Transverse colon (tissue), 4 donors: ENCODE measurements at regions of chr1 and their contacts with region 1.

Region 1: GRCh38 chr1:34162852-34163766 is 1.9 kb downstream of the CSMD2 start:
- DNase-seq: peak; percentile 25
- H3K4me3 ChIP-seq: peak overlapping the region in 3 of 4 donors; percentile 20 to 42 (median 24)
- H3K27ac ChIP-seq: no peak overlapping the region
- H3K4me1 ChIP-seq: peaks cover 0 to 34% (median 17%) of the 10 kb centered on the region in 4 donors
- H3K27me3 ChIP-seq: peaks cover 83% of the 10 kb centered on the region
- CTCF ChIP-seq: peak; percentile 27 to 53 (median 39)
- EP300 ChIP-seq: no peak
- POLR2A ChIP-seq: no peak

Region 2: DNA sequence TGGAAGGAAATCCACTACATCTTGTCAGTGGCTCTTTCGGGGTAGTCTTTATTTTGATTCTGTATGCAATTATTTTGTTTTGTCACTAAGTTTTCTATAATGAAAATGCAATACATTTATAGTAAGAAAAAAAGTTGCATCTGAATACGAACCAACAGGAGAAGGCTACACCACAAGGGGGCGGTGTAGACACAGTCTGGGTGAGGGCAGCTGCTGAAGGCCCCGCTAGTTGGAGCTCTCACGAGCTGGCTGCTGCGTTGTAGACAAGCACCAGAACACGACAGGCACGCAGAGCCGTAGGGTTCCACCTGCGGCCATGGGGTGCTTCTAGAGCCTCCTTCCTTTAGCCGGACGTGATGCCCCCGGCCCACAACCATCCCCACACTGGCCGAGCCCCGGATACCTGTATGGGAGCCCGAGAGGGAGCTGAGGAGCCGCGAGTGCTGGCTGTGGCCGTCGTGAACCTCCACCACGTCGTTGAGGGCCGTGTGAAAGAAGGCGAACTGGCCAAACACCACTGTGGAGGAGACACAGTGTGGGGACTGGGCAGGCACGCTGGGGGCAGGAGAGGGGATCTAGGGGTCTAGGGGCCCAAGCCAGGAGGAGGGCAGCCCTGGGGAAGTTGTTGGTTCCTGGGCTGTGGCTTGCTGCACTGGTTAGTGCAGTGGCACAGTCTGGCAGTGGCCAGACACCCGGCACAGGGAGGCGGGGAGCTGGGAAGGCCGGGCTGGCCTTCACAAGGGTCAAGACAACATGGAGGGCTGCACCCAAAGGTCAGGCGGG is 529.9 kb before region 1 on chr1:
- in situ Hi-C with region 1: loop called in 1 of 4 experiments (anchors 25 kb)
- intact Hi-C with region 1: loop called (anchors 10 kb)
- DNase-seq: peak; percentile 88
- H3K4me3 ChIP-seq: no peak overlapping the region
- H3K27ac ChIP-seq: no peak overlapping the region
- H3K4me1 ChIP-seq: no peaks in the 10 kb centered on the region
- H3K27me3 ChIP-seq: peaks cover 16% of the 10 kb centered on the region
- CTCF ChIP-seq: peak; percentile 77 to 97 (median 94)
- EP300 ChIP-seq: no peak
- POLR2A ChIP-seq: no peak